ENCODE measurements at regions of chr7 and their contacts with region 1.

Region 1: DNA sequence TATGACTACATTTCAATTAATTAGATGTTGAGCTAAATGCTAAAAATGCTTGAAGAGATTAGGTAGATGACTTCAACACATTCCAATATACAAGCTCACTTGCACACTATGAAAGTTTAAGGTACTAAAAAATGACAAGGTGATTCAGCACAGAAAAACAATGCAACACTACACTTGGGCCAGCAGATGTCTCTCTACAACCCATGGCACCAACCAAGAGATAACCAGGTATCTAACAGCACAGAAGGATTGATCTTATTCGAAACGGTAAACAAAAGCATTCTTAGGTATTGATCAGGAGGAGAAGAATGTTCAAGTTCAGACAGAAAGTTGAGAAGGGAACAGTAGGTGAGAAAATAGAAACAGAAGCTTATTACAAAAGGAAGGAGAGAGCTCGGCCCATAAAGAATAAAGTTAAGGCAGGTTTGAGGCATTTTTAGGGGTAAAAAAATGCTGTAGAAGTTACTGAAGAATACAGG is 248.2 kb upstream of the KLF14 start:
- DNase-seq: no peak
- H3K4me3 Mint-ChIP-seq: no peak overlapping the region
- H3K27ac Mint-ChIP-seq: no peak overlapping the region
- H3K4me1 Mint-ChIP-seq: peaks cover 24% of the 10 kb centered on the region
- H3K27me3 Mint-ChIP-seq: no peaks in the 10 kb centered on the region
- CTCF ChIP-seq: peak; percentile 61

Region 2: DNA sequence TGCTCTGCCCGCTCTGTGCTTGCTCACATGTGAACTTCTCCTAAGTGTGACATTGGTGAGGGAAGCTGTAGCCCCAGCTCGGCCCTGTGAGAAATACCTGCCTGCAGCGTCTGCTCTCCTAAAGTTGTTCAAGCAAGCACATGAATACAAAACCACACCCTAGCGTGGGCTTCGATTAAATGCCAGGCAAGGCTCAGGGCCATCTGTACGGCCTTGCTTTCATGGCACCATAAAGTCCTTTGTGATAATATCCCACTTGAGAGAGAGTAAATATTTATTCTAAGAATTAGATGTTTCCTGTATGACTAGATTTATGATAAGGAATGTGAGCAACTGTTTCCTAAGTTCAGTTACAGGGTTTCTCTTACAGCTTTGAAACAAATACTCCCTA is 14.6 kb after region 1 on chr7:
- CTCF ChIA-PET with region 1: interaction called, 17 read pairs
- intact Hi-C with region 1: no loop called
- DNase-seq: peak; percentile 71
- H3K4me3 Mint-ChIP-seq: peak overlapping the region; percentile 57
- H3K27ac Mint-ChIP-seq: peak overlapping the region; percentile 82
- H3K4me1 Mint-ChIP-seq: peaks cover 58% of the 10 kb centered on the region
- H3K27me3 Mint-ChIP-seq: no peaks in the 10 kb centered on the region
- CTCF ChIP-seq: no peak

Region 3: GRCh38 chr7:131007394-131008330 is 25.5 kb after region 1 on chr7:
- CTCF ChIA-PET with region 1: interaction called, 13 read pairs
- intact Hi-C with region 1: loop called (anchors 1 kb)
- DNase-seq: peak; percentile 79
- H3K4me3 Mint-ChIP-seq: peak overlapping the region; percentile 22
- H3K27ac Mint-ChIP-seq: peak overlapping the region; percentile 87
- H3K4me1 Mint-ChIP-seq: peaks cover 75% of the 10 kb centered on the region
- H3K27me3 Mint-ChIP-seq: no peaks in the 10 kb centered on the region
- CTCF ChIP-seq: peak; percentile 28

Region 4: DNA sequence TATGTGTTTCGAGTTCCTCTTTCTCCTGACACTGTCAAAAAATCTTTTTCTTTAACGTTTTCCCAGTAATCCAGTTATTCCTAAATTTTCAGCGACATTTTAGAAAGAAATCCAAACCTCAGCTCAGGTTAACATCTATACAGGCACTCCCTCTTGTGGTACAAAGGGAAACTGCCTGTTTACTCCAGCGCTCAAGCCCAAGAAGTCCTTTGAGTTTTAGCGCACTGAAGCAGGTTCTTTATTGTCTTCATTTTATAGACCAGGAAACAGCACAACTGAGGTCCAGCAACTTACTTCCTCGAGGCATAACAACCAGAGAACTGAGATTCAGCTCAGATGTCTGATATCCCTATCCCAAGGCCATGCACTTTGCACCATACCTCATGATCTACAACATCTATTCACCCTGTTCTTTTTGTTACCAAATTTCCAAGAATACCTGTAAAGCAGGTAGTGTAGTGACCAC is 58.3 kb after region 1 on chr7:
- CTCF ChIA-PET with region 1: interaction called, 25 read pairs
- intact Hi-C with region 1: loop called (anchors 1 kb)
- DNase-seq: peak; percentile 62
- H3K4me3 Mint-ChIP-seq: no peak overlapping the region
- H3K27ac Mint-ChIP-seq: no peak overlapping the region
- H3K4me1 Mint-ChIP-seq: peaks cover 28% of the 10 kb centered on the region
- H3K27me3 Mint-ChIP-seq: no peaks in the 10 kb centered on the region
- CTCF ChIP-seq: peak; percentile 62